Caki2 (cell line): ENCODE measurements at regions of chr1 and their contacts with region 1.

Region 1: DNA sequence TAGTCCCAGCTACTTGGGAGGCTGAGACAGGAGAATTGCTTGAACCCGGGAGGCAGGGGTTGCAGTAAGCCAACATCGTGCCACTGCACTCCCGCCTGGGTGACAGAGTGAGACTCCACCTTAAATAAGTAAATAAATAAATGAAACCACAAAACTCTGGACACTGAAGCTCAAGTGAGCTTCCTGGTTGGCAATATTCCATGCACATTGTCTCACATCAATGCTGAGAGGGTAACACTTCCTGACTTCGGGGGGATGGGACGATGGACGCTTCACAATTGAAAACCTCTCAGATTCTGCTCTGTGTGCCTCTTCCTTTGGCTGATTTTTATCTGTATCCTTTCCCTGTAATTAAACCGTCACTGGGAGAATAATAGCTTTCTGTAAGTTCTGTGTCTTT is 70.0 kb upstream of the ZNF644 start:
- DNase-seq: peak; percentile 82

Region 2: GRCh38 chr1:90325168-90325567 is 766.6 kb before region 1 on chr1:
- in situ Hi-C with region 1: no loop called
- DNase-seq: no peak

Region 3: GRCh38 chr1:91021686-91022517 is 69.9 kb before region 1 on chr1 and contains the start of gene ZNF644:
- in situ Hi-C with region 1: loop called (anchors 5 kb)
- DNase-seq: peak; percentile 85
- total RNA-seq, gene ZNF644: 9.5 and 12.9 TPM in 2 replicates